GM12878 (cell line): ENCODE measurements at regions of chr5 and their contacts with region 1.

Region 1: DNA sequence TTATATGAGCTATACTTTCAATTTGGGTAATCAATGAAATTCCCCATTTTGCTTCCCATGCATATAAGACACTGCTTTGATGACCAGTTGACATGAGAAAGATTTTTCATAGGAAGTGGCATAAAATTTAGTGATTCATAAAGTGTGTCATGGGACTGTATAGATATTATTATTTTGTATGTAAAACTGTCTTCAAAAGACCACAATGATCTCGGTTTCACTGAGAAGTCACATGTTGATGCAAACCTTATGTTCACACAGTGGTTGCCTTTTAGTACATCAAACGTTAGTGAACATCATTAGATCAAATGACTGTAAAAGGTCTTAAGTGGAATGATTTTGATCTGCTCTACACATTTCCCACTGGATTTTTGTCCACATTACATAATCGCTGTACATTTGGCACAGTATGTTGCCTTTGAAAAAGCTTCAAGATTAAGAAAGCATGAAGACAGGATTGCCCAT is 349.2 kb upstream of the MEF2C start:
- DNase-seq: peak; percentile 96
- ATAC-seq: peak; percentile 90
- H3K4me3 ChIP-seq: 0 out of 2 replicates have a peak overlapping the region, but pooled peaks have one; percentile 25
- H3K27ac ChIP-seq: peak overlapping the region; percentile 97
- H3K4me1 ChIP-seq: peaks cover 43% of the 10 kb centered on the region
- H3K27me3 ChIP-seq: no peaks in the 10 kb centered on the region
- CTCF ChIP-seq: no peak
- EP300 ChIP-seq: peak; percentile 96 to 98
- POLR2A ChIP-seq: no peak
- RAD21 ChIP-seq: no peak

Region 2: DNA sequence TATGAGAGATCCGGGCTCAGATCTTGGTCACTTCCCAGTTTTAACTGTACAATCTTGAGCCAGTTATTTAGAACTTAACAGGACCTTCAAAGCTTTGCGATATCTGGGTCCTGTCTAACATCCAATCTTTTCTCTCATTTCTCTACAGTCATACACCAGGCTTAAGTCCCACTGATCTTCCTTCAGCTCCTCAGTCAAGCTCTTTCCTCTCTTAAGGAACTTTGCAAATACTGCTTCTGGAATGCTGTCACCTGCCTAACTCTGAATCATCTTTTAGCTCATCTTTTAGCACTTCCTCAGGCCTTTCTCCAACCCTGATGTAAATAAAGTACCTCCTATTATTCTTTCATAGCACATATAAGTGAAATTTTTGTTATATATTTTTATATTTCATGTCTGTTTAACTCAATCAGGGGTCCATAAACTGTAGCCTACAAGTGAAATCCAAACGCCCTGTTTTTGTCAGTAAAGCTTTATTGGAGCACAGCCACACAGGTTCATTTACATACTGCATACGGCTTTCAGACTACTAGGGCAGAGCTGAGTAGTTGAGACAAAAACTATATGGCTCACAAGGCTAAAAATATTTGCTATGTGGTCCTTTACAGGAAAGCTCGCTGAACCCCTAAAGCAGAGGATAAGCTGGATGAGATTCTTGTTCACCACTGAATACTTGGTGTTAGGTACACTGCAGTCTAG is 412.7 kb before region 1 on chr5:
- CTCF ChIA-PET with region 1: interaction called, 3 read pairs
- POLR2A ChIA-PET with region 1: no interaction called
- RAD21 ChIA-PET with region 1: interaction called, 3 read pairs
- SMC1A ChIA-PET with region 1: interaction called, 15 read pairs
- in situ Hi-C with region 1: no loop called
- intact Hi-C with region 1: no loop called
- DNase-seq: no peak
- ATAC-seq: peak; percentile 35
- H3K4me3 ChIP-seq: peak overlapping the region; percentile 67
- H3K27ac ChIP-seq: peak overlapping the region; percentile 86
- H3K4me1 ChIP-seq: peaks cover 23% of the 10 kb centered on the region
- H3K27me3 ChIP-seq: no peaks in the 10 kb centered on the region
- CTCF ChIP-seq: no peak
- EP300 ChIP-seq: no peak
- POLR2A ChIP-seq: no peak
- RAD21 ChIP-seq: no peak

Region 3: DNA sequence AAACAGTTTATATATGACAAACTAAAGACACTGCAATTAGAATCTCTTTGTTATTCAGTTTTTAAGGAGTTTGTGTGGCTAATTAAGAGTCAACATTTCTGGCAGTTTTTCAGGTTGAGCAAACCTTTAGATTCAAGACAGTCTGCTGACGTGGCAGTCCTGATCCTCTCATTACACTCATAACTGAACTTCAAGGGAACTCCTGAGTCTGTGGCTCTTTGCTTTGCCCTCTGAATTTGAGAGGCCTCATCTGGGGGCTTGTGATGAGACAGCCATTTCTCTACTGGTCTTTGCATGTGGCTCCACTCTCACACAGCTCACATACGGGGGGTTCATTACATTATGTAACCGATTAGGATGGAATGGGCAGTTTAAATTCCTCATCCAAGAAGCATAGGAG is 166.3 kb before region 1 on chr5:
- CTCF ChIA-PET with region 1: no interaction called
- POLR2A ChIA-PET with region 1: no interaction called
- RAD21 ChIA-PET with region 1: interaction called, 9 read pairs
- SMC1A ChIA-PET with region 1: interaction called, 16 read pairs
- in situ Hi-C with region 1: no loop called
- intact Hi-C with region 1: loop called (anchors 5 kb)
- DNase-seq: peak; percentile 65
- ATAC-seq: peak; percentile 92
- H3K4me3 ChIP-seq: no peak overlapping the region
- H3K27ac ChIP-seq: peak overlapping the region; percentile 83
- H3K4me1 ChIP-seq: peaks cover 10% of the 10 kb centered on the region
- H3K27me3 ChIP-seq: no peaks in the 10 kb centered on the region
- CTCF ChIP-seq: no peak
- EP300 ChIP-seq: peak; percentile 56 to 68; a peak in 2 of 4 replicates
- POLR2A ChIP-seq: 0 out of 2 replicates have a peak, but pooled peaks have one; percentile 19
- RAD21 ChIP-seq: peak; percentile 27; the same call in 1 of the 2 replicates

Region 4: DNA sequence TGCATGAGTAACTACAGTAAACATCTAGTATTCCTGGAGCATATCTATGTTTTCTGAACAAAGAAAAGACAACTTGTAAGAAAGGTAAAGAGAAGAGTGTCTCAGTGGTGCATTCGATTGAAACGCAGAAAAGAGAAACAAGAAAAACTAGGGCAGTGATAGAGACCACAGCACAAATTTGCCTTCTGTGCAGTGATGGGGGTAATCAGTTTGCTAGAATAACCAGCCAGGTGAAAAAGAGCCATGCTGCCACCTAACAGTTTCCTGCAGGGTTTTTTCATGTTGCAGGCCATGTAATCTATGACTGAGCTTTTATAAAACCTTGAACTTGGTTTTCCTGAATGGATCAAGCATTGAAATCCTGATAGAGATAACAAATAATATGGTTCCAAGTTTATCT is 150.8 kb before region 1 on chr5:
- CTCF ChIA-PET with region 1: no interaction called
- POLR2A ChIA-PET with region 1: no interaction called
- RAD21 ChIA-PET with region 1: interaction called, 16 read pairs
- SMC1A ChIA-PET with region 1: interaction called, 3 read pairs
- in situ Hi-C with region 1: no loop called
- intact Hi-C with region 1: no loop called
- DNase-seq: peak; percentile 62
- ATAC-seq: peak; percentile 89
- H3K4me3 ChIP-seq: peak overlapping the region; percentile 3; the same call in 1 of the 2 replicates
- H3K27ac ChIP-seq: peak overlapping the region; percentile 55
- H3K4me1 ChIP-seq: peaks cover 11% of the 10 kb centered on the region
- H3K27me3 ChIP-seq: no peaks in the 10 kb centered on the region
- CTCF ChIP-seq: peak in 1 of 3 experiments; percentile 36; a peak in 2 of 6 replicates
- EP300 ChIP-seq: 0 out of 4 replicates have a peak, but pooled peaks of 1 of the 2 experiments have one; percentile 21
- POLR2A ChIP-seq: no peak
- RAD21 ChIP-seq: peak; percentile 54

Region 5: DNA sequence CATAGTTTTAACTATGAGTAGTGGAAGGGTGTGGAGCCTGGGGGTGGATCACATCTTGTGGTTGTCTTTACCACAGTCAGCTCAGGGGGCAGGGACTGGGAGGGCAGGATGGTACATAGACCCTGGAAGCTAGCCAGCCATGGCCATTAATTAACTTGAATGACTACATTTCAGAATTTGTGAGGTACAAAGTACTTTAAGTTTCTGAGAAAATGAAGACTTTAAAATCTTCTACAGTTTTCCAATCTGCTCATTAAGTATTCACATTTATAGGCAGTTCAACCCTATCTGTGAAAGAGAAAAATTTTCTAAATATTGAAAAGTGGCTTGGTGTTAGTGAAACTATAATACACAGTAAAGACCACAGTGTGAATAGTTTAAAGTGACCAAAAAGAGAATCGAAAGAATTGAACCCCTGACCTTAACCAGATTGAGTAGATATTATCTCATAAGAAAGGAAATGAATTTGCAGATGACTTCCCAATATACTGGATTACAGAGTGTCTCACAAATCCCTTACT is 115.0 kb before region 1 on chr5:
- CTCF ChIA-PET with region 1: no interaction called
- POLR2A ChIA-PET with region 1: no interaction called
- RAD21 ChIA-PET with region 1: interaction called, 10 read pairs
- SMC1A ChIA-PET with region 1: interaction called, 3 read pairs
- in situ Hi-C with region 1: no loop called
- intact Hi-C with region 1: loop called (anchors 2 kb)
- DNase-seq: peak; percentile 55
- ATAC-seq: peak; percentile 98
- H3K4me3 ChIP-seq: no peak overlapping the region
- H3K27ac ChIP-seq: no peak overlapping the region
- H3K4me1 ChIP-seq: no peaks in the 10 kb centered on the region; the same call in 1 of the 2 replicates
- H3K27me3 ChIP-seq: no peaks in the 10 kb centered on the region
- CTCF ChIP-seq: no peak
- EP300 ChIP-seq: peak; percentile 46 to 47; a peak in 1 of 4 replicates
- POLR2A ChIP-seq: no peak
- RAD21 ChIP-seq: no peak

Region 6: GRCh38 chr5:89282554-89283510 is 50.7 kb after region 1 on chr5:
- CTCF ChIA-PET with region 1: interaction called, 3 read pairs
- POLR2A ChIA-PET with region 1: interaction called, 5 read pairs
- RAD21 ChIA-PET with region 1: interaction called, 5 read pairs
- SMC1A ChIA-PET with region 1: interaction called, 4 read pairs
- in situ Hi-C with region 1: no loop called
- intact Hi-C with region 1: loop called (anchors 5 kb)
- DNase-seq: peak; percentile 31
- ATAC-seq: peak; percentile 54
- H3K4me3 ChIP-seq: no peak overlapping the region
- H3K27ac ChIP-seq: peak overlapping the region; percentile 59
- H3K4me1 ChIP-seq: peaks cover 40% of the 10 kb centered on the region
- H3K27me3 ChIP-seq: no peaks in the 10 kb centered on the region
- CTCF ChIP-seq: no peak
- EP300 ChIP-seq: peak in 1 of 2 experiments; percentile 30; a peak in 1 of 4 replicates
- POLR2A ChIP-seq: no peak
- RAD21 ChIP-seq: peak; percentile 1; the same call in 1 of the 2 replicates

Region 7: DNA sequence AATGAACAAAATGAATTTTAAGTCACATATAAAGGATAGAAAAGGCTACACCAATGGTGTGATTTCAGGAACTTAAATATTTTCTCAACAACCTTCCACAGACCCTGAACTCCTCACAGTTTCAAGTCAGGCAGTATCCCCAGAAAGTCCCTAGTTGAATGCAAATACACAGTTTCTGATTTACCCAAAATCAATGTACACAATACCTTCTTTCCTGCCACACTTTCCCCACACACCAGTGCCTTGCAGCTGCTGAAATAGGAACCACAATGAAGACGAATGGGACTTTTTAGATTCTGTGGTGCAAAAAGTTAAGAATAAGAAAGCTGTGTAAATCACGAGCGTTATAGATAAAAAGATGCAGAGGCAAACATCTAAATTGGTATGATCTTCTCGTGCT is 203.2 kb after region 1 on chr5:
- CTCF ChIA-PET with region 1: interaction called, 7 read pairs
- POLR2A ChIA-PET with region 1: no interaction called
- RAD21 ChIA-PET with region 1: interaction called, 5 read pairs
- SMC1A ChIA-PET with region 1: interaction called, 7 read pairs
- in situ Hi-C with region 1: no loop called
- intact Hi-C with region 1: loop called (anchors 2 kb)
- DNase-seq: peak; percentile 90
- ATAC-seq: peak; percentile 88
- H3K4me3 ChIP-seq: 0 out of 2 replicates have a peak overlapping the region, but pooled peaks have one; percentile 41
- H3K27ac ChIP-seq: peak overlapping the region; percentile 92
- H3K4me1 ChIP-seq: peaks cover 29% of the 10 kb centered on the region; the same call in 1 of the 2 replicates
- H3K27me3 ChIP-seq: no peaks in the 10 kb centered on the region
- CTCF ChIP-seq: 0 out of 6 replicates have a peak, but pooled peaks of 1 of the 3 experiments have one; percentile 3
- EP300 ChIP-seq: peak; percentile 50 to 87; a peak in 2 of 4 replicates
- POLR2A ChIP-seq: 0 out of 2 replicates have a peak, but pooled peaks have one; percentile 28
- RAD21 ChIP-seq: peak; percentile 53